Activated T-helper 1 cell treated with anti-CD3 and anti-CD28 coated beads, Interleukin-12 subunit alpha, Interleukin-12 subunit beta, Interleukin-2, Interleukin-4 antibody, amounts not matched to agents 30 ng/mL and 10 ng/mL and 1 ng/mL, durations not matched to agents 14 hours and 24 hours and 36 hours (primary cell): ENCODE measurements at regions of chr3 and their contacts with region 1.

Region 1: DNA sequence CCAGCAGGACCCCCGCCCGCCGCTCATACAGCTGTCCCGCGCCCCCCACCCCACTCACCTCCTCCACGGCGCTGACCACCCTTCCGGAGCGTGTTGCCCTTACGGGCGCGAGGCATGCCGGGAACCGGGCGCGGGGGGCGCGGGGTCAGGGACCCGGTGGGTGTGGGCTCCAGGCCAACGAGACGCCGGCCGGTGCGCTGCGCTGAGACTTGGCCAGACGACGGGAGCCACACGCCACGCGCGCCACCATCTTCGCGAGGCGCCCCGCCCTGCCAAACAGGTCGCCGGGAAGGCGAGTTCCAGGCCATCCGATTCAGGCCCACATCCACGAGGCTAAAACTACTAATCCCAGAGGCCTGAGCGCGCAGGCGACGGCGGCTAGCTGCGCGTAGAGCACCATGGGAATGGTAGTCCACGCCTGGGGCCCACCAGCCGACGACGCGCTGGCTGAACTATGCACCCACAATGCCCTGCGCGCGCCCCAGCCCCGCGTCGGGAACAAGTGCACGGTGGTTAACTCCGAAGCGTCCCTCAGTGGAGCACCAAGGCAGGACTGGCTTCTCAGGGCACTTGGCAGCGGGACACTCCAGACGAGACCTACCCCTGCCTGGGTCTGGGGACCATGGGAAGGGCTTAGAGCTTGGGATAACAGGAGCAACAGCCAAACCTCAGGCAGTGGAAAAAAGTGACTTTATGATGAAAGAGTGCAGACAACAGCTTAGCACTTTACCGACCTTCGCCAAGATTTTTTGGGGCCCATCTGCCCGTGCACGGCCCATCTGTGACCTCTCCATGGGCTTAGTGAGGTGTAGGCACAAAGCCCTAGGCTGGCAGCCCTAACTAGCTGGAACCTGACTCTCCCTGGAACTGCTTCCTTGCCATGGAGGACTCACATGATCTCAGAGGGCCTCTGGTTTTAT is at the start of gene IFRD2:
- DNase-seq: peak; percentile 95
- H3K4me3 Mint-ChIP-seq: peak within 1 kb of the TSS; percentile 96
- H3K27ac Mint-ChIP-seq: peak within 1 kb of the TSS; percentile 83
- H3K4me1 Mint-ChIP-seq: peaks cover 14% of the 10 kb centered on the region
- H3K27me3 Mint-ChIP-seq: no peaks in the 10 kb centered on the region
- total RNA-seq, gene IFRD2: 215 TPM in 2 replicates

Region 2: DNA sequence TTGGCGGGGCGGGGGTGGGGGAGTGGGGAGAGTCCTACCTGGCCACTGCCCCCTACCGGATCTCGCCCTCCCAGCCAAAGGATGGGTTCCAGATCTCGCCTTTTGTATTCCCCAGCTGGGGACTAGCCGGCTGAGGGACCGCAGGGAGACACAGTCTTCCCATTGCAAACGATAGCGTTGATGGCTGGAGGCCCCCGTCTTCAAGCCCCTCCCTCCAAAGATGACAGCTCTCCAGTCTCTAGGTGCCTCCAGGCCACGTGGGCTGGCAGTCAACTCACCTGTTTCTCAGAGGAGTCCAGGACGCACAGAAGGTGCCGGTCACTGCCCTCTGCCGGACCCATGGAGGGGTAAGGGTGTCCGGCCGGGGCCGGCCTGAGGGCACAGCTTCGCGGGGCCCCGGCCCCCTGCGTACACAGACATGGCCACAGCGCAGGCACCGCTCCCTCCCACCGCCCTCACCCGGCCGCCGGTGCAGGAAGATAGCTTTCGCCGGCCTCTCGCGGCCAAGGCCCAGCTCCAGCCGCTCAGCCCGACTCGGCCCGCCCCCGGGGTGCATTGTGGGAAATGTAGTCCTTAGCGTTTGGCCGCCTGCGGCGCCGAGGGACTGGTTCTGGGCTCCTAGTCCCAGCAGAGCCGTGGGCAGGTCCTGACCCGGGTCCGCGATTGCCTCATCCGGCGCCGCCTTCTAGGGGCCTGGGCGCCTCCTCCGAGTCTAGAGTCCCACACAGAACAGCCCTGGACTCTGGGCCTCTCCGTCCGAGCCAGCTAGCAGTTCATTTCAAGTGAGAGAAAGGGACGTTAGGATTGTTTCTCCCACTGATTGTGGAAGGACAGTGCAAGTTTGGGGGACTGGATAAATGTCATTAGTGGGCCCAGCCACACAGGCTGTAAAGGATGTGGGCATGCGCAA is 362.8 kb before region 1 on chr3 and contains the start of gene MON1A:
- intact Hi-C with region 1: loop called (anchors 1 kb)
- DNase-seq: peak; percentile 88
- H3K4me3 Mint-ChIP-seq: peak within 1 kb of the TSS; percentile 90
- H3K27ac Mint-ChIP-seq: peak within 1 kb of the TSS; percentile 81
- H3K4me1 Mint-ChIP-seq: peaks cover 21% of the 10 kb centered on the region
- H3K27me3 Mint-ChIP-seq: no peaks in the 10 kb centered on the region
- total RNA-seq, gene MON1A: 15.5 and 17.3 TPM in 2 replicates

Region 3: GRCh38 chr3:50235716-50236496 is 56.5 kb before region 1 on chr3 and contains the start of gene GNAI2:
- intact Hi-C with region 1: loop called (anchors 1 kb)
- DNase-seq: peak; percentile 99
- H3K4me3 Mint-ChIP-seq: peak within 1 kb of the TSS; percentile 99
- H3K27ac Mint-ChIP-seq: peak within 1 kb of the TSS; percentile 94
- H3K4me1 Mint-ChIP-seq: peaks cover 32% of the 10 kb centered on the region
- H3K27me3 Mint-ChIP-seq: no peaks in the 10 kb centered on the region
- total RNA-seq, gene GNAI2: 237 and 238 TPM in 2 replicates

Region 4: DNA sequence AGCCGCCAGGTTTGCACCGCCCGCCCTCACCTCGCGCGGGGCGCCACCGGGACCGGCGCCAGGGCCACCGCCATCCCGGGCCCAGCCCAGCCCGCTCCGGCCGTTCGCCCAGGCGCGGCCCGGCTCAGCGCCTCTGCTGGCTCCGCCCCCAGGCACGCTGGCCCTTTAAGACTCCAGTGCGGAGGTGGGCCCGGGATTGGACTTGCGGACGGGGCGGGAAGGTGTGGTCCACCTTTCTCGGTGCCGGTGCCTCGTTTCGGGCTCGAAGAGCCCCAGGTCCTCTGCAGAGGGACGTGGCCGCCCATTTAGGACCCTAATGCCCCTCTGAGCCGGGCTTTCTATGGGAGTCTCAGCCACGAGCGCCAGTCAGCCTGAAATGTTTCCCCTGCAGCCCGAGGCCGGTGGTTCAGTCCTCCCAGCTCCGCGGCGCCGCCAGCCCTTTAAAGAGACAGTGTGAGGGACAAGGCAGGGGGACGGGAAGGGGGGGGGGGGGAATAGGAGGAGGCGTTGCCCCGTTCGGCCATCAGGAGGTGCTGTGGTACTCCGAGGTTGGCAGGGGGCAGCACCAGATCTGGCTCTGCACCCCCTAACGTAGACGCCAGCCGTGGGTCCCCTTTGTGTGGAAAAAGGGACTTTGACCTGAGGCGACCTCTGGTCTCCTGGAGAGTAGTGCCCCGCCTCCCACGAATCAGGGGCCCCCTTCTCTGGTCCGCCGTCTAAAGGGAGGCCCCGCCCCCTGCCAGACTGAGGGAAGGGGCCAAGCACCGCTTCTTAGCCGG is 29.1 kb after region 1 on chr3:
- intact Hi-C with region 1: loop called (anchors 1 kb)
- DNase-seq: peak; percentile 81
- H3K4me3 Mint-ChIP-seq: peak overlapping the region; percentile 79
- H3K27ac Mint-ChIP-seq: peak overlapping the region; percentile 83
- H3K4me1 Mint-ChIP-seq: peaks cover 35% of the 10 kb centered on the region
- H3K27me3 Mint-ChIP-seq: no peaks in the 10 kb centered on the region

Region 5: GRCh38 chr3:50337191-50337841 is 44.9 kb after region 1 on chr3:
- intact Hi-C with region 1: loop called (anchors 1 kb)
- DNase-seq: peak; percentile 96
- H3K4me3 Mint-ChIP-seq: peak overlapping the region; percentile 96
- H3K27ac Mint-ChIP-seq: peak overlapping the region; percentile 97
- H3K4me1 Mint-ChIP-seq: peaks cover 51% of the 10 kb centered on the region
- H3K27me3 Mint-ChIP-seq: no peaks in the 10 kb centered on the region

Region 6: DNA sequence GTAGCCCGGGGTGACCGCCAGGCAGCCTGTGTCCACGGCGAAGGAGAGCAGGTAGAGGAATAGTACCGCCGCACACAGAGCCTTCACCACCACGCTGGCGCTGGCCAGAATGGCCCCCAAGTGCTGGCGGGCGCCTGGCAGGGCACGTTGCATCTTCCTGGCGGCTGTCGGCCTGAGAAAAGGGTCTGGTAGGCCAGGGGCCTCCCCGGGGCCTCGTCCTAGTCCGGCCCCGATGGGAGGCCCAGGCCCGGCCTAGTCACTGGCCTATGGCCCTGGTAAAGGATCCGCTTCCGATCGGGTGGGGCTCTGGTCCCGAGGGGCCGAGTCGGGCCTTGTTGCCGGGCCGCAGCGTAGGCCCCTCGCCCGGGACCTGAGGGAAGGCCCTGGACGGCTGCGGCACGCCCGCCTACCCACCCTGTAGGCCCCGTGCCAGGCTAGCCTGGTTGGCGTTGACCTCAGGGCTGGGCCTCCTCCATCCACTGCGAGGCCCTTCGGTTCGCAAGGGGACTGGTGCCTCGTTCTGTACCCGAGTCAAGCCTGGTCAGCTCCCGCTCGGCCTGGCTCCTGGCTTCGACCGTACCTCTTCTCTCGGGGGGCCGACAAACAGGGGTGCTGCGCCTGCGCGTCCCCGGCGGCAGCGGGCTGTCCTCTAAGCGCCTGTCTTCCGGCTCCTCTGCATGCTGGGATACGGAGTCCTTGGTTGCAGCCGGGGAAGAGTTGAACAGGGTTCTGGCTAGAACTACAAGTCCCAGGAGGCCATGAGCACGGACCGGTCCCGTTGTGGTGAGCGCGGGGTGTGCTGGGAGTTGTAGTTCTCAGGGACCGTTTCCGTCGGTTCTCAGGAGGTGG is 66.7 kb after region 1 on chr3 and contains the start of gene TMEM115:
- intact Hi-C with region 1: loop called (anchors 1 kb)
- DNase-seq: peak; percentile 95
- H3K4me3 Mint-ChIP-seq: peak within 1 kb of the TSS; percentile 99
- H3K27ac Mint-ChIP-seq: peak within 1 kb of the TSS; percentile 96
- H3K4me1 Mint-ChIP-seq: peaks cover 43% of the 10 kb centered on the region
- H3K27me3 Mint-ChIP-seq: peaks cover 4% of the 10 kb centered on the region
- total RNA-seq, gene TMEM115: 23.6 and 25.4 TPM in 2 replicates

Region 7: DNA sequence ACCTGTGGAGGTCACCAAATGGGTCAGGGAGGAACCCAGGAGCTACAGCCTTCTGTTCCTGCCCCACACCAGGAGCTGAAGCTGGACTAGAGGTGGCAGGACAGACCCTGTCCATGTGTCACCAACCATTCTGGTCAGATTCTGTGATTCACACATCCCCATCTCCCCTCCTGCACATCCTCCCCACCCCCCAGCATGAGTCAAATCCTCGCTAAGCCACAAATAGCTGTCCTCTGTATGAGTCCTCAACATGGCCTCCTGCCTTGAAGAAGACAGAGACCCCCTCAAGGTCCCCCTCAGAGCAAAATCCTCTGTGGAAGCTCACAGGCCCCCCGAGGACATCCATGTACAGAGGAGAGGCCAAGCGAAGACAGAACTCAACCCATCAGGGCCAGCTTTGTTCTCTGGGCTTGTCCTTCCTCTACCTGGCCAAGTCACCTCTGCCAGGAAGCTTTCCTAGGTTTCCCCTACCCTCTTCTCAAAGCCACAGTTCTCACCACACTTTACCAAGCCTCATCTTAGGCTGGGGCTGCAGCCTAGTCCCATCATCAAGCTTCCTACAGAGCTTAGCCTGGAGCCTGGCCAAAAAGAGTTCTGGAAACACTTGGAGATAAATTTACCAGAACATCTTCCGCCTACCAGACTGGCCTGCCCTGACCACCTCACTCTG is 193.9 kb after region 1 on chr3:
- intact Hi-C with region 1: no loop called
- DNase-seq: no peak
- H3K4me3 Mint-ChIP-seq: no peak overlapping the region
- H3K27ac Mint-ChIP-seq: no peak overlapping the region
- H3K4me1 Mint-ChIP-seq: peaks cover 10% of the 10 kb centered on the region
- H3K27me3 Mint-ChIP-seq: no peaks in the 10 kb centered on the region